Mammary epithelial cell (primary cell): ENCODE measurements at regions of chr3 and their contacts with region 1.

Region 1: DNA sequence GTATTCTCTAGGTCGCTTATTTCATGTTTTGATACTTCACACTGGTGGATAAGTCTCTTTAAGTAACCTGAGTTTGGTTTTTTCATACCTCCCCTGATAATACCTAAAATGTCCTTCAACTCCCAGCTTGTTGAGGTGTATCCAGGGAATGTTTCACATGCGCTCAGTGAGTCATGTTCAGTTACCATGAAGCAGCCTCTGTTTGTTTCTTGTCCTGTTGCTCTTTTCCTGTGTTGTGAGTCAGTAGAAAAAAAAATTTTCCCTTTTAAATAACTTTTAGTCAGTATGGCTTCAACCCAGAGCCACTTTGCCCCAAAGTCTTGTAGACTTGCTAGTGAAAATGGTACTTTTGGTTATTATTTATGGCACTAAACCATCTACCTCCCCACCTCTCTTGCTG is 278.4 kb upstream of the ZPLD1 start:
- DNase-seq: peak; percentile 97
- H3K4me3 ChIP-seq: no peak overlapping the region
- H3K27ac ChIP-seq: peak overlapping the region; percentile 100
- H3K4me1 ChIP-seq: peaks cover 24% of the 10 kb centered on the region
- H3K27me3 ChIP-seq: no peaks in the 10 kb centered on the region
- CTCF ChIP-seq: no peak

Region 2: DNA sequence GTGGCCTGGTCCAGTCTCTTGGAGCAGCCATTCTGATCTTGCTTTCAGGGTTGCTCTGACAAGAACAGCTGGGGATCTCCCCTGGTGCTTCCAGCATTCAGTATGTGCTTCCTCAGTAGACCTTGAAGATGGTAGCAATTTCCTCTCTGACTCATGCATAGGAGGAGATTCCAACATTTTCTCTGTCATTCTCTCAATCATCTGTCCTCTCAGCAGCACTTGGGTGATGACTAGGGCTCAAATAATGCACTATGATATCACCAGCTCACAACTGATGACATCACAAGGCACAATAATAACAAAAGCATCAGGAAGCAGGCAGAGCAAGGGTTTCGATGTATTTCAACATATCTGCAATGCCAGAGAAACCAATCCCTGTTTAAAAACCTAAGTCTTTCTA is 254.4 kb before region 1 on chr3:
- CTCF ChIA-PET with region 1: no interaction called
- dilution Hi-C with region 1: no loop called
- in situ Hi-C with region 1: no loop called
- intact Hi-C with region 1: loop called (anchors 5 kb)
- DNase-seq: peak; percentile 98
- H3K4me3 ChIP-seq: no peak overlapping the region
- H3K27ac ChIP-seq: peak overlapping the region; percentile 78
- H3K4me1 ChIP-seq: peaks cover 6% of the 10 kb centered on the region
- H3K27me3 ChIP-seq: no peaks in the 10 kb centered on the region
- CTCF ChIP-seq: no peak

Region 3: GRCh38 chr3:102124301-102125158 is 31.9 kb before region 1 on chr3:
- CTCF ChIA-PET with region 1: no interaction called
- dilution Hi-C with region 1: no loop called
- in situ Hi-C with region 1: no loop called
- intact Hi-C with region 1: loop called (anchors 2 kb)
- DNase-seq: peak; percentile 94
- H3K4me3 ChIP-seq: no peak overlapping the region
- H3K27ac ChIP-seq: peak overlapping the region; percentile 99
- H3K4me1 ChIP-seq: peaks cover 19% of the 10 kb centered on the region
- H3K27me3 ChIP-seq: no peaks in the 10 kb centered on the region
- CTCF ChIP-seq: no peak

Region 4: DNA sequence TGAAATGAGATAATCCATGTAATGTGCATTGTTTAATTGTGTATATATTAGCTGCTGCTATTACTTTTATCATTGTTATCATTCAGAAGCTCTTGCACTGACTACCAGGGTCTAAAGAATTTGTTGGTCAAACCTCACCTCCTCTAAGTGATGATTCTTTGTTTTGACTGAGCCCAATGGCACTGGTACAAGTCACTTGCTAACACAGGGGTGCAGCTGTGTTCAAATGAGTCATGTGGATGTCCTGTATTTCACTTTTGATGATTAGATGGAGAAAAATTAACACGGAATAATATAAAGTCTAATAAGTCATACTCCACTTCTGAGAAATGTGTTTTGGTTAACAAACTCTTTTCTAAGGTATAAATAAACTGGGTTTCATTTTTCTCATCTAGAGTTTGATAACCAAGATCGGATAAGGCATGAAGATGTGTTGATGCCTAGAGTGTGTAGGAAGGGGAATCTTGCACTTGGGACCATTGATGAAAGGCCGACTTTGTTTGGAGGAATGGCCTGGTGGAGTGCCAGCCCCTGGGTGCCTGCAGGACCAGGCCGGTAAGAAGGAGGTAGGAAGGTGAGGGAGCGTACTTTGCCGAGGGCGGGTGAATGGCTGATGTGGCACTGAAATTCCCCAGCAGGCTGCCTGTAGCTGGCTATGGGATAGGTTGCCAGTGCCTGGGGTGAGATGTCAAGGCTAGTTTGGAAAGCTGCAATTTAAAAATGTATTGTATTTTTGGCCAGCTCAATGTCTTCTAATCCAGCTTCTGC is 33.7 kb after region 1 on chr3:
- CTCF ChIA-PET with region 1: no interaction called
- dilution Hi-C with region 1: loop called (anchors 5 kb)
- in situ Hi-C with region 1: no loop called
- intact Hi-C with region 1: loop called (anchors 1 kb)
- DNase-seq: peak; percentile 83
- H3K4me3 ChIP-seq: peak overlapping the region; percentile 5 to 22 (median 10)
- H3K27ac ChIP-seq: peak overlapping the region; percentile 94
- H3K4me1 ChIP-seq: peaks cover 67% of the 10 kb centered on the region
- H3K27me3 ChIP-seq: no peaks in the 10 kb centered on the region
- CTCF ChIP-seq: peak in 1 of 2 donors; percentile 7

Region 5: DNA sequence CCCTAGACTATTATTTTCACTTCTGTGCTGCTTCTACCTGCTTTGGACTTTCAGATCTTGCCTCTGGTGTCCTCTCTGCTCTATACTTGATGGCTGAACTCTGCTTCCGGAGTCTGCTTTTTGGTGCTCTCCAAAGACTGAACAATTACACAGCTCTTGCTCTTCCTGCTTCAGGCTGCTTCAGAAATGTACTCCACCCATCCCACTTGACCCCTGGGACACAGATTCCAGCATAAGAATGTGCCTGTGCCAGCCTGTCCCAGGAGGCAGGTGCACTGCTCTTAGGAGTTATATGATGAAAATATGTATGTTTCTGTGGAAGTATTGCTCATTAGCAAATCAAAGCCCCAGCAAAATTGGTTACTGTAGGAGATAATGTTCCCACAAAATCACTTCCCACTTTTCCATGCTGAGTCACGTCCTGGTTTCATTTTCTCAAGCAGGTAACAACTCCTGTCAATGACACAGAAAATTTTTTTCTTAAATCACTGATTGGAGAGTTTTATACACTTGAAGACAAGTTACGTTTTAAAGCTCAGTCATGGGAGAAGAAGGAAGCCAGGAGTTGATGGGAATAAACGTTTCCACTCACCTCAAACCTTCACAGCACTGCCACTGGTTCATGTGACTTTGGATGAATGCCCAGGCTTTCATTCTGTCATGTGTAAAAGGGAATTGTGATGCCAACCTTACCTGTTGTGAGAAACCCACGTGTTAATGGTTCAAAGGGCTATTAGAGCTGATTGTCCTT is 38.9 kb after region 1 on chr3:
- CTCF ChIA-PET with region 1: no interaction called
- dilution Hi-C with region 1: loop called (anchors 5 kb)
- in situ Hi-C with region 1: no loop called
- intact Hi-C with region 1: loop called (anchors 1 kb)
- DNase-seq: peak; percentile 96
- H3K4me3 ChIP-seq: no peak overlapping the region
- H3K27ac ChIP-seq: peak overlapping the region; percentile 94
- H3K4me1 ChIP-seq: peaks cover 62% of the 10 kb centered on the region
- H3K27me3 ChIP-seq: no peaks in the 10 kb centered on the region
- CTCF ChIP-seq: no peak

Region 6: GRCh38 chr3:102224128-102224527 is 67.7 kb after region 1 on chr3:
- CTCF ChIA-PET with region 1: no interaction called
- dilution Hi-C with region 1: loop called (anchors 5 kb)
- in situ Hi-C with region 1: no loop called
- intact Hi-C with region 1: loop called (anchors 2 kb)
- DNase-seq: no peak
- H3K4me3 ChIP-seq: no peak overlapping the region
- H3K27ac ChIP-seq: no peak overlapping the region
- H3K4me1 ChIP-seq: peaks cover 2% of the 10 kb centered on the region
- H3K27me3 ChIP-seq: no peaks in the 10 kb centered on the region
- CTCF ChIP-seq: peak; percentile 22 to 52